ENCODE measurements at regions of chrX and their contacts with region 1.

Region 1: GRCh38 chrX:149286940-149287349 is 218.2 kb downstream of the IDS start:
- DNase-seq: peak; percentile 59
- H3K4me3 Mint-ChIP-seq: no peak overlapping the region
- H3K27ac Mint-ChIP-seq: no peak overlapping the region
- H3K4me1 Mint-ChIP-seq: peaks cover 17% of the 10 kb centered on the region
- H3K27me3 Mint-ChIP-seq: no peaks in the 10 kb centered on the region

Region 2: DNA sequence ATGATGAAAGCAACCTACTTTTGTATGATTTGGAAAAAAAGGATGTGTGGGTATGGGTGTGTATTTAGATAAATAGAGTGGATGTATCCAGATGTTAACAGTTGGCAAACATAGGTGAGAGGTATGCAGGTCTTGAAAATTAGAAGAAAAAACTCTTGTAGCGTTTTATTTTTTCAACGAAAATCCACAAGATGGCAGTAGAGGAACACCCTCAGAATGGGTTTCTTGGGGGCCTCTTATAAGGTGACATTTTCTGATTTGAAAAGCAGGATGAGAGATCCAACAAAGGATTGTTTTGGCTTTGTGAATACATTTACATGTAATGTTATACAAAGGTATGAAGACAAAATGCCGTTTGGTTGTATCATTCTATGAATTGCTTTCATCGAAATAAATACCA is 1237.5 kb before region 1 on chrX:
- CTCF ChIA-PET with region 1: no interaction called
- intact Hi-C with region 1: loop called (anchors 1 kb)
- DNase-seq: no peak
- H3K4me3 Mint-ChIP-seq: no peak overlapping the region
- H3K27ac Mint-ChIP-seq: no peak overlapping the region
- H3K4me1 Mint-ChIP-seq: no peaks in the 10 kb centered on the region
- H3K27me3 Mint-ChIP-seq: no peaks in the 10 kb centered on the region

Region 3: GRCh38 chrX:148282504-148282903 is 1004.4 kb before region 1 on chrX:
- CTCF ChIA-PET with region 1: no interaction called
- intact Hi-C with region 1: loop called (anchors 10 kb)
- DNase-seq: no peak
- H3K4me3 Mint-ChIP-seq: no peak overlapping the region
- H3K27ac Mint-ChIP-seq: peak overlapping the region; percentile 92
- H3K4me1 Mint-ChIP-seq: peaks cover 36% of the 10 kb centered on the region
- H3K27me3 Mint-ChIP-seq: no peaks in the 10 kb centered on the region

Region 4: GRCh38 chrX:148794350-148794749 is 492.6 kb before region 1 on chrX:
- CTCF ChIA-PET with region 1: no interaction called
- intact Hi-C with region 1: no loop called
- DNase-seq: no peak
- H3K4me3 Mint-ChIP-seq: no peak overlapping the region
- H3K27ac Mint-ChIP-seq: no peak overlapping the region
- H3K4me1 Mint-ChIP-seq: no peaks in the 10 kb centered on the region
- H3K27me3 Mint-ChIP-seq: no peaks in the 10 kb centered on the region

Region 5: GRCh38 chrX:149040873-149041535 is 245.9 kb before region 1 on chrX:
- CTCF ChIA-PET with region 1: no interaction called
- intact Hi-C with region 1: no loop called
- DNase-seq: no peak
- H3K4me3 Mint-ChIP-seq: no peak overlapping the region
- H3K27ac Mint-ChIP-seq: no peak overlapping the region
- H3K4me1 Mint-ChIP-seq: no peaks in the 10 kb centered on the region
- H3K27me3 Mint-ChIP-seq: no peaks in the 10 kb centered on the region

Region 6: DNA sequence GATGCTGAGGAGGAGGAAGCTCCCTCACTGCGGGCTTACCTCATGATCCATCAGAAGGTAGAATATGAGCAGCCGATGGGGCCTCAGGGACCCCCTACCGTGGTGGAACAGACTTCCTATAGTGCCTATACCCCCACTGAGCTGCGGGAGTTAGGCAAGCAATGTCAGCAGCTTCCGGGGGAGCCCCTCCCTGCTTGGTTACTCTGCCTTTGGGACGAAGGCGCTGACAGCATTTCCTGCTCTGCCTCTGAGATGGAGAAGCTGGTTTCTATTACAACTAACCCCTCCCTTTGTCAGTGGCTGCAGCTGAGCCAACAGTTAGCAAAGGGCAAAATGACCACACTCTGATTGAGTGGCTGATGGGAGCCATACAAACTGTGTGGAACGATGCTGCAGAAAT is 212.5 kb before region 1 on chrX:
- CTCF ChIA-PET with region 1: no interaction called
- intact Hi-C with region 1: loop called (anchors 10 kb)
- DNase-seq: peak; percentile 56
- H3K4me3 Mint-ChIP-seq: no peak overlapping the region
- H3K27ac Mint-ChIP-seq: no peak overlapping the region
- H3K4me1 Mint-ChIP-seq: peaks cover 6% of the 10 kb centered on the region
- H3K27me3 Mint-ChIP-seq: no peaks in the 10 kb centered on the region

Region 7: GRCh38 chrX:149470955-149471354 is 184.0 kb after region 1 on chrX:
- CTCF ChIA-PET with region 1: interaction called, 4 read pairs
- intact Hi-C with region 1: loop called (anchors 10 kb)
- DNase-seq: peak; percentile 67
- H3K4me3 Mint-ChIP-seq: no peak overlapping the region
- H3K27ac Mint-ChIP-seq: no peak overlapping the region
- H3K4me1 Mint-ChIP-seq: no peaks in the 10 kb centered on the region
- H3K27me3 Mint-ChIP-seq: no peaks in the 10 kb centered on the region